ENCODE measurements at regions of chr15 and their contacts with region 1.

Region 1: GRCh38 chr15:73697033-73697467 is 12.9 kb downstream of the CD276 start:
- DNase-seq: peak; percentile 96
- ATAC-seq: peak; percentile 94
- H3K4me3 ChIP-seq: no peak overlapping the region
- H3K27ac ChIP-seq: peak overlapping the region; percentile 84
- H3K4me1 ChIP-seq: peaks cover 23% of the 10 kb centered on the region
- H3K27me3 ChIP-seq: no peaks in the 10 kb centered on the region
- CTCF ChIP-seq: no peak

Region 2: GRCh38 chr15:73305331-73306211 is 391.5 kb before region 1 on chr15:
- CTCF ChIA-PET with region 1: no interaction called
- POLR2A ChIA-PET with region 1: no interaction called
- intact Hi-C with region 1: loop called (anchors 2 kb)
- DNase-seq: peak; percentile 74
- ATAC-seq: peak; percentile 93
- H3K4me3 ChIP-seq: no peak overlapping the region
- H3K27ac ChIP-seq: no peak overlapping the region
- H3K4me1 ChIP-seq: no peaks in the 10 kb centered on the region
- H3K27me3 ChIP-seq: no peaks in the 10 kb centered on the region
- CTCF ChIP-seq: peak; percentile 89

Region 3: DNA sequence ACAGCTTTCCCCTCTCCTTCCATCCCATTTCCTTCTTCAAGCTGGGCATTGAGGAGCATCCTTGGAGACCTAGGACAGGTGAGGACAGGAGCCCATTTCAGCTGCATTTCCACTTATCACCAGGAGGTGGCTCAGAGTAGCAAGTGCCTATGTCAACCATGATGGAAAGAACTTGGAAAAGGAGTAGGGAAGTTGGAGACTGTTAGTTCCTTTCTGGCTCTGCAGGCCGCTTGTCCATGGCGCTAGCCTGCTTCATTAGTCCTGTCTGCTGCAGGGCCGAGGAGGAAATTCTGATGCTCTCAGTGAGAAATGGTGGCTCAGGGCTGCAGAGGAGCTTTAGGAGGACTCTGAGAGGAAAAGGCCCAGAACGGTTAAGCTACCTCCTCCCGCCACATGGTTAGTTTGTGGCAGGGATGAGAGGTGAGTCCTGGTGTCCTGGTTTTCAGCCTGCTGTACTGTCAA is 19.9 kb before region 1 on chr15:
- CTCF ChIA-PET with region 1: interaction called, 4 read pairs
- POLR2A ChIA-PET with region 1: interaction called, 3 read pairs
- intact Hi-C with region 1: loop called (anchors 1 kb)
- DNase-seq: peak; percentile 81
- ATAC-seq: peak; percentile 75
- H3K4me3 ChIP-seq: no peak overlapping the region
- H3K27ac ChIP-seq: no peak overlapping the region
- H3K4me1 ChIP-seq: peaks cover 10% of the 10 kb centered on the region
- H3K27me3 ChIP-seq: no peaks in the 10 kb centered on the region
- CTCF ChIP-seq: peak; percentile 82